ENCODE measurements at regions of chr3 and their contacts with region 1.

Region 1: GRCh38 chr3:143831208-143831607 is 17.1 kb downstream of the SLC9A9 start:
- DNase-seq: peak; percentile 17
- H3K4me3 Mint-ChIP-seq: no peak overlapping the region
- H3K27ac Mint-ChIP-seq: no peak overlapping the region
- H3K4me1 Mint-ChIP-seq: peaks cover 37% of the 10 kb centered on the region
- H3K27me3 Mint-ChIP-seq: no peaks in the 10 kb centered on the region

Region 2: GRCh38 chr3:143171141-143171970 is 659.9 kb before region 1 on chr3:
- CTCF ChIA-PET with region 1: no interaction called
- intact Hi-C with region 1: loop called (anchors 5 kb)
- DNase-seq: peak; percentile 26
- H3K4me3 Mint-ChIP-seq: peak overlapping the region; percentile 7
- H3K27ac Mint-ChIP-seq: peak overlapping the region; percentile 82
- H3K4me1 Mint-ChIP-seq: peaks cover 67% of the 10 kb centered on the region
- H3K27me3 Mint-ChIP-seq: no peaks in the 10 kb centered on the region

Region 3: DNA sequence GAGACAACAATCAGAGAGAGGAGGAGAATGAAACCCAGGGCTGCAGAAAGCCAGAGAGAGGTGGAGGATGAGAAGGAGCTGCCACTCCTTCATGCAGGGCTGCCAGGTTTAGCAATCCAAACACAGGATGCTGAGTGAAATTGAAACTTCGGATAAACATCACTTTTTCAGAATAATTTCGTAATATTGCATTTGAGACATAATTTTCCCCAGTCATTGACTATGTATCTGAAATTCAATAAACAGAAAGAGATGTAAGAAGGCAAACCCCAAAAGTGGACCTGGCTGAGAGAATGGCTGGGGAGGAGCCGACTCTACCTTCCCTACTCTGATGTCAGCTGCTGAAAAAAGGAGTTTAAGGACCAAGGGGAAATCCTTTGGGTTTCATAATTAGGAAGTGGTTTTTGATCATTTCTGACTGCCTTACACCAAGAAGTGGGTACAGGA is 16.7 kb before region 1 on chr3:
- CTCF ChIA-PET with region 1: no interaction called
- intact Hi-C with region 1: loop called (anchors 1 kb)
- DNase-seq: peak; percentile 23
- H3K4me3 Mint-ChIP-seq: no peak overlapping the region
- H3K27ac Mint-ChIP-seq: peak overlapping the region; percentile 4
- H3K4me1 Mint-ChIP-seq: peaks cover 16% of the 10 kb centered on the region
- H3K27me3 Mint-ChIP-seq: no peaks in the 10 kb centered on the region